ENCODE measurements at regions of chr10 and their contacts with region 1.

Region 1: DNA sequence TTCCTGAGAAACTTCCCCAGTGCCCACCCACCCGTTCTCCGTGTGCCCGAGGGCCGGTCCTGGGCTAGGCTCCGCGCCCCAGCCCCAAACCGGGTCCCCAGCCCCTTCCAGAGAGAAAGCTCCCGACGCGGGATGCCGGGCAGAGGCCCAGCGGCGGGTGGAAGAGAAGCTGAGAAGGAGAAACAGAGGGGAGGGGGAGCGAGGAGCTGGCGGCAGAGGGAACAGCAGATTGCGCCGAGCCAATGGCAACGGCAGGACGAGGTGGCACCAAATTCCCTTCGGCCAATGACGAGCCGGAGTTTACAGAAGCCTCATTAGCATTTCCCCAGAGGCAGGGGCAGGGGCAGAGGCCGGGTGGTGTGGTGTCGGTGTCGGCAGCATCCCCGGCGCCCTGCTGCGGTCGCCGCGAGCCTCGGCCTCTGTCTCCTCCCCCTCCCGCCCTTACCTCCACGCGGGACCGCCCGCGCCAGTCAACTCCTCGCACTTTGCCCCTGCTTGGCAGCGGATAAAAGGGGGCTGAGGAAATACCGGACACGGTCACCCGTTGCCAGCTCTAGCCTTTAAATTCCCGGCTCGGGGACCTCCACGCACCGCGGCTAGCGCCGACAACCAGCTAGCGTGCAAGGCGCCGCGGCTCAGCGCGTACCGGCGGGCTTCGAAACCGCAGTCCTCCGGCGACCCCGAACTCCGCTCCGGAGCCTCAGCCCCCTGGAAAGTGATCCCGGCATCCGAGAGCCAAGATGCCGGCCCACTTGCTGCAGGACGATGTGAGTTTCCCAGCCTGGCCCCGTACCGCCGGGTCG is at the start of gene SCD:
- DNase-seq: peak; percentile 81
- ATAC-seq: peak; percentile 91
- H3K4me3 Mint-ChIP-seq: peak within 1 kb of the TSS; percentile 100
- H3K27ac Mint-ChIP-seq: peak within 1 kb of the TSS; percentile 75
- H3K4me1 Mint-ChIP-seq: peaks cover 41% of the 10 kb centered on the region
- H3K27me3 Mint-ChIP-seq: no peaks in the 10 kb centered on the region
- total RNA-seq, gene SCD: 212 to 220 TPM

Region 2: GRCh38 chr10:100364735-100365391 is 17.9 kb after region 1 on chr10:
- POLR2A ChIA-PET with region 1: interaction called, 87 read pairs
- DNase-seq: no peak
- ATAC-seq: peak; percentile 29
- H3K4me3 Mint-ChIP-seq: no peak overlapping the region
- H3K27ac Mint-ChIP-seq: peak overlapping the region; percentile 7
- H3K4me1 Mint-ChIP-seq: peaks cover 38% of the 10 kb centered on the region
- H3K27me3 Mint-ChIP-seq: no peaks in the 10 kb centered on the region

Region 3: GRCh38 chr10:100551196-100551595 is 204.2 kb after region 1 on chr10:
- POLR2A ChIA-PET with region 1: no interaction called
- DNase-seq: no peak
- ATAC-seq: no peak
- H3K4me3 Mint-ChIP-seq: no peak overlapping the region
- H3K27ac Mint-ChIP-seq: no peak overlapping the region
- H3K4me1 Mint-ChIP-seq: peaks cover 14% of the 10 kb centered on the region
- H3K27me3 Mint-ChIP-seq: no peaks in the 10 kb centered on the region

Measured in activated naive CD8-positive, alpha-beta T cell treated with anti-CD3 and anti-CD28 coated beads, Interleukin-2, amount 10 ng/mL, durations not matched to agents 7 days and 5 days (primary cell).